K562 (cell line): ENCODE measurements at regions of chr12 and their contacts with region 1.

Region 1: GRCh38 chr12:71415336-71416231 is 24.0 kb upstream of the LGR5 start:
- DNase-seq: peak; percentile 44 to 68 (median 53)
- ATAC-seq: peak; percentile 95
- H3K4me3 ChIP-seq: no peak overlapping the region
- H3K27ac ChIP-seq: no peak overlapping the region
- H3K4me1 ChIP-seq: no peaks in the 10 kb centered on the region
- H3K27me3 ChIP-seq: no peaks in the 10 kb centered on the region
- CTCF ChIP-seq: peak; percentile 70 to 80 (median 72)
- EP300 ChIP-seq: no peak
- POLR2A ChIP-seq: no peak
- RAD21 ChIP-seq: peak; percentile 80 to 91

Region 2: DNA sequence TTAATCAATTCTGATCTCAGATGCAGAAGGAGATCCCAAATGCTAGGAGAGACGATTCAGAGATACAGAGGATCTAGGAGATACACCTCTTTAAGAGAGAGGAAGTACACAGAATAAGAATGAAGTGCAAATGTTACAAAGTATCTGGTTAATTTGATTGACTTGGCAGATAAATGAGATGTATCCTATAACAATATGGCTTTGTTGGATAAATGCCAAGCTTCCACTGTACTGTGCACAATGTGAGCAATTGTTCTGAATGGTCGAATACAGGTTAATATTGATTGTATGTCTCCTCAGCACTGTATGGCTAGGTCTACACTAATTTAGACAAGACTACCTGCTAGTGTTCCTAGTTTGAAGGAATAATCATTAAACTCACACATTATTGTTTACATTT is 658.8 kb before region 1 on chr12:
- CTCF ChIA-PET with region 1: no interaction called
- POLR2A ChIA-PET with region 1: no interaction called
- in situ Hi-C with region 1: no loop called
- intact Hi-C with region 1: no loop called
- DNase-seq: peak in 1 of 4 experiments; percentile 24
- ATAC-seq: peak; percentile 26; the same call in 2 of the 3 replicates
- H3K4me3 ChIP-seq: no peak overlapping the region
- H3K27ac ChIP-seq: peak overlapping the region; percentile 70
- H3K4me1 ChIP-seq: peaks cover 0 to 15% of the 10 kb centered on the region in 2 experiments; a peak in 3 of 5 replicates
- H3K27me3 ChIP-seq: no peaks in the 10 kb centered on the region
- CTCF ChIP-seq: no peak
- EP300 ChIP-seq: no peak
- POLR2A ChIP-seq: no peak
- RAD21 ChIP-seq: no peak

Region 3: DNA sequence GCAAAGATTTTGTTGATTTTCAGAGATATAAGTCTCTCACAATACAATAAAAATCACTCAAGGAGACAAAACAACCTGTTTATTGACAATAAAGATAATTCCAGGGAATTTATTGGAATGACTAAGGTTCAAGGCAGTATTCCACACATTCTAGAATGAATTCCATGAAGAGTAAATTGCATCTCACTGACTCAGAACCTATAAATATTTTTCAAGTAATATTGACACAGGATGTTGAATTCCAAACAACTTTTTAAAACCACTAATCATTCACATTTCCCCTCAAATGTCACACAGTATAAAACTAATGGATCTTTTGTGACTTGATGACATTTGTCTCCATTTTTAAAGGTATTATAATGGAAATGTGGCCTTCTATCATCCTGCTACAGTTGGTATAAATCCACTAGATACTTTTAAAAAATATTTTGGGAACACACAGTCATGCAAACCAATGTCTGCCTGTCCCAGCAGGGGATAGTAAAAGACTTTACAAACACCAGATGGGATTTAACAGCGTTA is 18.1 kb before region 1 on chr12:
- CTCF ChIA-PET with region 1: no interaction called
- POLR2A ChIA-PET with region 1: no interaction called
- in situ Hi-C with region 1: no loop called
- intact Hi-C with region 1: no loop called
- DNase-seq: no peak
- ATAC-seq: no peak
- H3K4me3 ChIP-seq: no peak overlapping the region
- H3K27ac ChIP-seq: no peak overlapping the region
- H3K4me1 ChIP-seq: peaks cover 0 to 7% of the 10 kb centered on the region in 2 experiments; a peak in 2 of 5 replicates
- H3K27me3 ChIP-seq: no peaks in the 10 kb centered on the region
- CTCF ChIP-seq: no peak
- EP300 ChIP-seq: no peak
- POLR2A ChIP-seq: no peak
- RAD21 ChIP-seq: no peak

Region 4: GRCh38 chr12:71551529-71551928 is 135.9 kb after region 1 on chr12:
- CTCF ChIA-PET with region 1: interaction called, 4 read pairs
- POLR2A ChIA-PET with region 1: no interaction called
- in situ Hi-C with region 1: no loop called
- intact Hi-C with region 1: loop called (anchors 1 kb)
- DNase-seq: peak in 2 of 4 experiments; percentile 13 to 28
- ATAC-seq: peak; percentile 73
- H3K4me3 ChIP-seq: no peak overlapping the region
- H3K27ac ChIP-seq: no peak overlapping the region
- H3K4me1 ChIP-seq: no peaks in the 10 kb centered on the region
- H3K27me3 ChIP-seq: no peaks in the 10 kb centered on the region
- CTCF ChIP-seq: peak; percentile 48 to 79 (median 60); a peak in 4 of 6 replicates
- EP300 ChIP-seq: no peak
- POLR2A ChIP-seq: no peak
- RAD21 ChIP-seq: peak; percentile 67 to 83

Region 5: GRCh38 chr12:71567537-71567936 is 152.0 kb after region 1 on chr12:
- CTCF ChIA-PET with region 1: no interaction called
- POLR2A ChIA-PET with region 1: no interaction called
- in situ Hi-C with region 1: no loop called
- intact Hi-C with region 1: loop called (anchors 1 kb)
- DNase-seq: peak; percentile 18 to 74 (median 31)
- ATAC-seq: peak; percentile 95
- H3K4me3 ChIP-seq: no peak overlapping the region
- H3K27ac ChIP-seq: no peak overlapping the region
- H3K4me1 ChIP-seq: peaks cover 0 to 10% of the 10 kb centered on the region in 2 experiments; a peak in 4 of 5 replicates
- H3K27me3 ChIP-seq: no peaks in the 10 kb centered on the region
- CTCF ChIP-seq: peak; percentile 39 to 50 (median 48); a peak in 5 of 6 replicates
- EP300 ChIP-seq: no peak
- POLR2A ChIP-seq: no peak
- RAD21 ChIP-seq: peak; percentile 54 to 58

Region 6: DNA sequence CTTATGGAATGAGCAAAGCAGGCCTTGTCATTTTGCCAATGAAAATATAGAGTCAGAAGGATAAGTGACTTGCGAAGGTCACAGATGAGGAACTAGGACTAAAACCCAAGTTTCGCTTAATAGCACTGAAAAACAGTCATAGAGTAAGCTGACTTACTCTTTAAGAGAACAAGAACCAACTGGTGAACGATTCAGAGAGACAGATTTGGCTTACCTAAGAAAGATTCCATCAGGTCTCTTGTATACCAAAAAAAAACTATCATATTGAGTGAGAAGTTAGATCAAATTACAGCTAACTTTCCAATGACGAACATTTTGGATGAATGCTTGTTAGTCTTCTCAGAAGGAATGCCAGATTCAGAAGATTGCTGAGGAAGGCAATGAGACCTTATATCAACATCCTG is 173.9 kb after region 1 on chr12:
- CTCF ChIA-PET with region 1: no interaction called
- POLR2A ChIA-PET with region 1: no interaction called
- in situ Hi-C with region 1: no loop called
- intact Hi-C with region 1: no loop called
- DNase-seq: no peak
- ATAC-seq: no peak
- H3K4me3 ChIP-seq: no peak overlapping the region
- H3K27ac ChIP-seq: no peak overlapping the region
- H3K4me1 ChIP-seq: peaks cover 0 to 10% of the 10 kb centered on the region in 2 experiments; a peak in 2 of 5 replicates
- H3K27me3 ChIP-seq: no peaks in the 10 kb centered on the region
- CTCF ChIP-seq: no peak
- EP300 ChIP-seq: no peak
- POLR2A ChIP-seq: no peak
- RAD21 ChIP-seq: no peak

Region 7: GRCh38 chr12:71636704-71637115 is 221.1 kb after region 1 on chr12:
- CTCF ChIA-PET with region 1: interaction called, 3 read pairs
- POLR2A ChIA-PET with region 1: no interaction called
- in situ Hi-C with region 1: no loop called
- intact Hi-C with region 1: loop called (anchors 2 kb)
- DNase-seq: peak; percentile 42 to 70 (median 49)
- ATAC-seq: peak; percentile 66; the same call in 2 of the 3 replicates
- H3K4me3 ChIP-seq: no peak overlapping the region
- H3K27ac ChIP-seq: no peak overlapping the region
- H3K4me1 ChIP-seq: peaks cover 0 to 1% of the 10 kb centered on the region in 2 experiments; a peak in 2 of 5 replicates
- H3K27me3 ChIP-seq: no peaks in the 10 kb centered on the region
- CTCF ChIP-seq: peak; percentile 43 to 68 (median 66); a peak in 5 of 6 replicates
- EP300 ChIP-seq: no peak
- POLR2A ChIP-seq: no peak
- RAD21 ChIP-seq: peak; percentile 42 to 64; a peak in 3 of 4 replicates

Region 8: DNA sequence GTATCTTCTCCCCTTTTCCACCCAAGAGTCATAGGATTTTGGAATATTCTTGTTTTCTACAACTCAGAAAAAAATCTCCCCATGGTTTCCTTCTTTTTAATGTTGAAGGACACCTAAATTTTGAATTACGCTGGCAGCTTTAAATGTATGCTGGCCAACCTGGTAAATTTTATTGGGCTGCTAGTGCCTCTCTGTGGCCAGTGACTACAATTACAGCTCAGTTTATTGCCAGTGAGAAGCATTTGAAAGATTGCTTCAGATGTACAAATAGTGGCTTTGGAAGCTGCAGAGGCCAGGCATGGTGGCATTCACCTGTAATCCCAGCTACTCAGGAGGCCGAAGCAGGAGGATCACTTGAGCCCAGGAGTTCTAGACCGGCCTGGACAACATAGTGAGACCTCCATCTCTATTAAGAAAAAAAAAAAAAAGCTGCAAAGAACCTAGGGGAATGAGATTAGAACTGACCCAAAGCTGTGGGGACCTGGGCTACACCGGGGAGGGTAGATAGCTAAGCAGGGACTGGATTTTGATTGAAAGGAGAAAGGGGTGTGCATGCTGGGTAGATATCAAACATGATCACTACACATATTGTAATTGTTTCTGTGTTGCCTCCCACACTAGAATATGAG is 331.5 kb after region 1 on chr12:
- CTCF ChIA-PET with region 1: interaction called, 8 read pairs
- POLR2A ChIA-PET with region 1: no interaction called
- in situ Hi-C with region 1: loop called (anchors 10 kb)
- intact Hi-C with region 1: loop called (anchors 1 kb)
- DNase-seq: peak in 3 of 4 experiments; percentile 28 to 73 (median 45)
- ATAC-seq: peak; percentile 84
- H3K4me3 ChIP-seq: no peak overlapping the region
- H3K27ac ChIP-seq: no peak overlapping the region
- H3K4me1 ChIP-seq: peaks cover 3 to 10% of the 10 kb centered on the region in 2 experiments; a peak in 2 of 5 replicates
- H3K27me3 ChIP-seq: no peaks in the 10 kb centered on the region
- CTCF ChIP-seq: peak; percentile 69 to 89 (median 77)
- EP300 ChIP-seq: no peak
- POLR2A ChIP-seq: no peak
- RAD21 ChIP-seq: peak; percentile 88 to 91

Region 9: DNA sequence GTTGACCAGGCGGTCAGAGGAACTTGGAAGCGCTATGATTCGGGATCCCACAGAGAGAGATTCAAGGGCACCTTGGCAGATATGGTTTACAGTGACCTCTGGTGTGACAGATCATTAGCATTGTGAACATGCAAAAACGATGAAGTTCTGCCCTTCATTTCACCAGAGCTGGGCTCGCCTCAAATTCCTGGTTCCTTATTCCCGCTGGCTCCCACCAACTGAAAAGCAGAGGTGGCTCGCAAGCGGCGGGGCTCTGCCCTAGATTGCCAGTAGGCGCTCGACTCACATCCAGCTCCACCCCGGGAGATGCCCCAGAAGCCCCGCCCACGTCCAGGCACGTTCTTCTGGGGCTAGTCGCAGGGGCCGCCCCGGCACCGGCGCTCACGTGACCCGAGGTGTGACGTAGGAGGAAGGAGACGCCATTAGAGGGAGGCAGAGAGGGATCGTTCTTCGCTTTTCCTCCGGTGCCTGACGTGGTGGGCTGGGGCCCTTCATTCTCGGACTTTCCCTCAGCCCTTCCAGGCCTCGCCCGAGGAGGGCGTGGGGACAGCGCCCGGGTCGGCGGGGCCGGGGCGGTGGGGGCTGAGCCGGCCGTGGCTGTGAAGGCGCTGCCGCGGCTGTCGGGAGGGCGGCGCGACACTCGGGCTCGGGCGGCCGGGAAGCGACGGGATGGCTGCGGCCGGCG is 339.0 kb after region 1 on chr12 and contains the start of gene RAB21:
- CTCF ChIA-PET with region 1: no interaction called
- POLR2A ChIA-PET with region 1: no interaction called
- in situ Hi-C with region 1: loop called (anchors 10 kb)
- intact Hi-C with region 1: no loop called
- DNase-seq: peak; percentile 96 to 98 (median 96)
- ATAC-seq: peak; percentile 92
- H3K4me3 ChIP-seq: peak within 1 kb of the TSS; percentile 67
- H3K27ac ChIP-seq: peak within 1 kb of the TSS; percentile 93
- H3K4me1 ChIP-seq: peaks cover 12 to 28% of the 10 kb centered on the region in 2 experiments; a peak in 4 of 5 replicates
- H3K27me3 ChIP-seq: no peaks in the 10 kb centered on the region
- CTCF ChIP-seq: peak in 2 of 3 experiments; percentile 1 to 14; a peak in 2 of 6 replicates
- EP300 ChIP-seq: no peak
- POLR2A ChIP-seq: peak; percentile 84
- RAD21 ChIP-seq: no peak
- polyA plus RNA-seq, gene RAB21: 5.3 to 8.2 TPM

Region 10: DNA sequence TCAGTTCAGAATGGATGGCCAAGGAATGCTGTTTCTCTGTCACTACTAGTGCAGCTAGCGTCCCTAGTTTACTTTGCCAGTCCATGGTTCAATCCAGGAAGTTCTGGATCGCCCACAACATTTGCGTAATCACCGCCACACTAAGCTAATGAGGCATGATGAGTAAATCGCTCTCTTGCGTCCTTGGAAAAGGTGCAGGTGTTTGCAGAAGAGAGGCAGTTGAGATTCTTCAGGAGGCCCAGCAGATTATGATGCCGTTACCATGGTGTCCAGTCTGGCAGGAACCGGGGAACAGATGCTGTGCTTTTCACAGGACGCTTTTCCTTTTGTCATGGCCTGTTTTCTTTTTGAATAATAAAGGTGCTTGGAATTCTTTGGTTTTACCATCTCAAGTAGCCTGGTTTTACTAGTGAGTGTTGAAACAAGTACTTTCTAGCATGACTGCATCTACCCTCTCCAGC is 532.1 kb after region 1 on chr12:
- CTCF ChIA-PET with region 1: no interaction called
- POLR2A ChIA-PET with region 1: no interaction called
- in situ Hi-C with region 1: no loop called
- intact Hi-C with region 1: loop called (anchors 10 kb)
- DNase-seq: no peak
- ATAC-seq: no peak
- H3K4me3 ChIP-seq: no peak overlapping the region
- H3K27ac ChIP-seq: no peak overlapping the region
- H3K4me1 ChIP-seq: peaks cover 0 to 2% of the 10 kb centered on the region in 2 experiments; a peak in 2 of 5 replicates
- H3K27me3 ChIP-seq: peaks cover 0 to 5% of the 10 kb centered on the region in 2 experiments; a peak in 3 of 5 replicates
- CTCF ChIP-seq: no peak
- EP300 ChIP-seq: no peak
- POLR2A ChIP-seq: no peak
- RAD21 ChIP-seq: no peak